Testis (tissue), 5 donors: ENCODE measurements at regions of chr4 and their contacts with region 1.

Region 1: DNA sequence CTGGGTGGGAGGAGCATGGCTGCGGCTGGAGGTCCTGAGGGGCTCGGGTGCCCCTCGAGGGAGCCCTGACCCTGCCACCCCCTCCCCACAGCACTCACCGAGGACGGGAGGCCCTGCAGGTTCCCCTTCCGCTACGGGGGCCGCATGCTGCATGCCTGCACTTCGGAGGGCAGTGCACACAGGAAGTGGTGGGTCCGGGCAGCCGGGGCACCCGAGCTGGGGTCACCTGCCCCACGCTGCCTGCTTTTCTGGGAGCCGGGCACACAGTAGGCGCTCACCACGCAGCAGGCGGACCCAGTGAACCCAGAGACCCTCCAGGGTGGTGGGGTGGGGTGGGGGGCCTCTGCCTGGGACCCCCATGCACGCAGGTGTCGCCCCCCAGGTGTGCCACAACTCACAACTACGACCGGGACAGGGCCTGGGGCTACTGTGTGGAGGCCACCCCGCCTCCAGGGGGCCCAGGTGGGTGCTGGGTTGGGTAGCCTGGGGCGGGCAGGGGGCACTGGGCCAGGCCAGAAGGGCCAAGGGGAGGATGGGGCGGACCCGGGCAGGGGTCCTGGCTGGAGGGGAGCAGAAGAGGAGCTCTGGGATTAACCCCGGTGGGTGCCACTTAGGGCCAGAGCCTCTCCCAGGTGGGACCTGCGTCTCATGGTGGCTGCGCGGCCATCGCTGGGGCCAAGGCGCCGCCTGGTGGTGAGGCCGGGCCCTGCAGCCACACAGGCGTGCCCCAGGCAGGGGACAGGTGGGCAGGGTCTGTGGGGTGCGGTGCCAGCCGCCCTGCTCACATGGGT is 1.4 kb downstream of the HGFAC start:
- DNase-seq: peak; percentile 42
- H3K4me3 ChIP-seq: no peak overlapping the region
- H3K27ac ChIP-seq: no peak overlapping the region
- H3K4me1 ChIP-seq: peaks cover 2% of the 10 kb centered on the region
- H3K27me3 ChIP-seq: no peaks in the 10 kb centered on the region
- CTCF ChIP-seq: peak; percentile 95 to 96 (median 96)
- POLR2A ChIP-seq: no peak

Region 2: DNA sequence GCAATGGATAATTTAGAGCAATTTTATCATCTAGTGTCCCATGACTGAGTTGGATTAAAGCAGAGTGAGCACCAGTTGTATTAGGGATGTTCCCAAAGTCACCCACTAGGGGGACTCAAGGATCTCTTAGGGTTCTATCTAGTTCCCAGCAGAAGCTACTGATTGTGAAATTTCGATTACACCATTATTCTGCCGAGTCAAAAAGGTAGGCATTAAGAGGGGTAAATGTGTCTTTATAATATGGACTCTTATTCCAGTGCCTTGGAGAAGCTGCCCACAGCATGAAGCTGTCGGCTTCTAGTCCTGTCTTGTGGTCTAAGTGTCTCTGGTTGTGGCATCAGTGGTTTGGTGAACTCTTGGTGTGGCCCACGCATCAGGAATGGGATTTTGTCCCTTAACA is 97.0 kb before region 1 on chr4:
- intact Hi-C with region 1: loop called (anchors 5 kb)
- DNase-seq: peak; percentile 80
- H3K4me3 ChIP-seq: no peak overlapping the region
- H3K27ac ChIP-seq: no peak overlapping the region
- H3K4me1 ChIP-seq: no peaks in the 10 kb centered on the region
- H3K27me3 ChIP-seq: no peaks in the 10 kb centered on the region
- CTCF ChIP-seq: peak; percentile 79 to 84 (median 82)
- POLR2A ChIP-seq: no peak

Region 3: GRCh38 chr4:3677748-3678070 is 234.6 kb after region 1 on chr4:
- intact Hi-C with region 1: no loop called
- DNase-seq: no peak
- H3K4me3 ChIP-seq: no peak overlapping the region
- H3K27ac ChIP-seq: no peak overlapping the region
- H3K4me1 ChIP-seq: no peaks in the 10 kb centered on the region
- H3K27me3 ChIP-seq: no peaks in the 10 kb centered on the region
- CTCF ChIP-seq: no peak
- POLR2A ChIP-seq: no peak